Activated T-helper 1 cell treated with anti-CD3 and anti-CD28 coated beads, Interleukin-12 subunit alpha, Interleukin-12 subunit beta, Interleukin-2, Interleukin-4 antibody, amounts not matched to agents 30 ng/mL and 10 ng/mL and 1 ng/mL, durations not matched to agents 14 hours and 24 hours and 36 hours (primary cell): ENCODE measurements at regions of chr14 and their contacts with region 1.

Region 1: DNA sequence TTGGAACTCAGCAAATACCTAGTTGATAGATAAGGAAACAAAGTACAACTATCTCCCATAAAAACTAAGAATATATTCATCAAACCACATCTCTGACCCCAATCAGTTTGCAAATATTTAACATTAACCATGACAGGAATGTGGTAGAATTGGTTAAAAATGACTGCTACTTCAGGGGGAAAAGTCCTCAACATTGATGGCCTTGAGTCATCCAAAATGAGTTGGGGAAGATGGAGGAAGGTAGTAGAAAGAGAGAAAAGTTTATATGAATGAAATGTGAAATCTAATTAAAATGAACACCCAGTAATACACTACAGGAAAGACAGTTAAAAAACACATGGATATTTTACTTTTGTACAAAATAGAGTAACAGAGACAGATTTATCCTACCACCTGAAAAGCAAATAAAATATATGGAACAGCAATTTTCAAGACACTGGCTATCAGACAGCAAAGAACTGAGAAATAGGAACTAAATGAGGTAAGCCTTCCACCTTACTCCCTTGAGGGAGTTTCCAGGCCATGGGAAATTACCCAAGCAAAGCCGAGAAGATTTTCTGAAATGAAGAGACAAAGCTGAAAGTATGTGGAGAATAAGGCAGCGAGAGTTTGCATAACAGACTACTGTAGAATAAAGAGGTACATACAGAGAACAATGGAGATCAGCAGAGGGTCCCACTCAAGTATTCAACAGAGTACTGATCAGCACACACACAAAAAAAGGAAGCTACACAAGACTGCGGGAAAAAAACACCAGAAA is 49.6 kb downstream of the TC2N start:
- DNase-seq: no peak
- H3K4me3 Mint-ChIP-seq: no peak overlapping the region
- H3K27ac Mint-ChIP-seq: peak overlapping the region; percentile 33
- H3K4me1 Mint-ChIP-seq: peaks cover 45% of the 10 kb centered on the region
- H3K27me3 Mint-ChIP-seq: no peaks in the 10 kb centered on the region

Region 2: DNA sequence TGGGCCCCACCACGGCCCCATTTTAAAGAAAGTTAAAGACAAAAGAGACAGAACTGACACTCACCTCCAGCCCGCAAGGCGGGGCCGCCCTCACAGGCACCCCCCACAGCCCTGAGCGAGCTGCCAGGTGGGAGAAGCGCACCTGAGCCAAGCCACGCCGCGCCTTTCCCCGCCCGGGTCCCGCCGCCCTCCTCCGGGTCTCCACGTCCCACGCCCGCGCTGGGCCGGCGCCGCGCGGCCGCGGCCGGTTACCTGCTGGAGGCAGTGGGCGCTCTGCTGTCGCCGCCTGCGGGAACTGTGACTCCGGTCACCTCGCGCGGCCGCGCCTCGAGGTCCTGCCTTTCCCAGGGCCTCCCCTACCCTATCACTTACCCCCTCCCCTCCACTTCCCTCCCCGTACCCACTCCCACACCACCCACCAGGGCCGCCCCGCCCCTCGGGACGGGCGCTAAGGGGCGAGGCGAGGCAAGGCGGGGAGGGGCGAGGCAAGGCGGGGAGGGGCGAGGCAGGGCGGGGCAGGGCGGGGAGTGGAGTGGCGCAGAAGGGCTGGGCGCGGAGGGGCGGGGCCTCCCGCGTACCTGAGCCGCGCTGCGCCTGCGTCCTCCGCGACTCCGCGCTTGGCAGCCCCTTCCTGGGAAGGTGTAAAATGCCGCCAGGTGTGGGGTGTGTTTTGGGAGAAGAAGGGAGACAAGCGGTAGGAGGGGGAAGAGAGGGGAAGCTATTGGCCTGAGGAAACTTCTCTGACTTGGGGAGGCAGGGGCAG is 18.6 kb after region 1 on chr14:
- intact Hi-C with region 1: loop called (anchors 1 kb)
- DNase-seq: peak; percentile 49
- H3K4me3 Mint-ChIP-seq: peak overlapping the region; percentile 85
- H3K27ac Mint-ChIP-seq: no peak overlapping the region
- H3K4me1 Mint-ChIP-seq: peaks cover 67% of the 10 kb centered on the region
- H3K27me3 Mint-ChIP-seq: no peaks in the 10 kb centered on the region